AG04450 (cell line): ENCODE measurements at regions of chr9 and their contacts with region 1.

Region 1: DNA sequence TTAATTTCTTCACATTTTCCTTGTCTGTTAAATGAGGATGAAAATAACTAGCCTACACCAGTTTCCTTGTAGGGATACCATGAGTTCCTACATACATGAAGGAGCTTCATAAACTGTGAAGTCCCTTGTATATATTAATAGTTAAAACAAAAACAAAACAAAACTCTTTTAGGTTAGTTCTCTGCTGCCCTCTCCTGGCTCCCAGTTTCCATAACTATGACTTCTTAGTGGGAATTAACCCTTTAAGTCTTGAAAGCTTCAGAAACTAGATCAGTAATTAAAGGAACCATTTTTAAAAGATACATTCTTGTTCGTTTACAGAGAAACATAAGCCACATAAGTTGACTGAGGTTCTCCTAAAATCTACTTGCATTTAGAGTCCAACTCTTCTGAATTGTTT is 500.0 kb upstream of the C9orf72 start:
- DNase-seq: no peak
- H3K4me3 ChIP-seq: no peak overlapping the region
- H3K27ac ChIP-seq: no peak overlapping the region
- H3K27me3 ChIP-seq: no peaks in the 10 kb centered on the region
- CTCF ChIP-seq: peak; percentile 43

Region 2: DNA sequence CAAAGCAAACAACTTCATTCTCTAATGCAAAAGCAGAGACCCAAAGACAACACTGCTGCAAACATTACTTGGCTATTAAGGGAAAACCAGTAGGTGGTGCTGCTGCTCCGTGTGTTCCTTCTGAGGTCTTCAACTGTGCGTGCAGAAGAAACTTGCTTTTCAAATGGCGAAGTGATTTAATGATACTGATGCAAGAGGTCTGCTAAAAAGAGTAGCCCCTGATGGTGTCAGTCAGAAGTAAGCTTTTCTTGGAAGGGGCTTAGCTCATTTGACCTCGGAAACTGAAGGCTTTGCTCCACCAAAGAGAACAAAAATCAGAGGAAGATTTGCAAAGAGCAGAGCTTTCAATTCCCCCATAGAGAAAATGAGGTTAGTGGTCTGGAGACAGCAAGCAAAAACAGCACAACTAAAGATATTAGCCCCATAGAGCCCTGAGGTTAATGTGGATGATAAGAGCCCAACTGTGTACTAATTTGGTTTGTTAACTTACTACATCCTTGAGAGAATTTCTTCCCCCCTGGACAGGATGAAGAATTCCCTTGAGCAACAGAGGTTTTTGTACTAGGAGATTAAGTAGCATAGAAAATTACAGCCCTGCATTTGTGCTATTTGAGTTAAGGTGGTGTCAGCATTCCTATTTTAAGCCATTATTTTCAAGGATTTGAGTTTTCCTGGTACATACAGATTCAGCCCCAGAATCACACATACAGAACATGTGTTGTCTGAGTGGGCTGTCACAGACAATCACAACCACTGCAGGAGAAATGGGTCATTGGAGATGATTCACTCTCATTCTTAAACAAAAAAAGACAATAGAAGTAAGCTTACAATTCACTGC is 346.8 kb before region 1 on chr9:
- CTCF ChIA-PET with region 1: interaction called, 57 read pairs
- POLR2A ChIA-PET with region 1: no interaction called
- DNase-seq: peak; percentile 1
- H3K4me3 ChIP-seq: no peak overlapping the region
- H3K27ac ChIP-seq: no peak overlapping the region
- H3K27me3 ChIP-seq: no peaks in the 10 kb centered on the region
- CTCF ChIP-seq: peak; percentile 74

Region 3: DNA sequence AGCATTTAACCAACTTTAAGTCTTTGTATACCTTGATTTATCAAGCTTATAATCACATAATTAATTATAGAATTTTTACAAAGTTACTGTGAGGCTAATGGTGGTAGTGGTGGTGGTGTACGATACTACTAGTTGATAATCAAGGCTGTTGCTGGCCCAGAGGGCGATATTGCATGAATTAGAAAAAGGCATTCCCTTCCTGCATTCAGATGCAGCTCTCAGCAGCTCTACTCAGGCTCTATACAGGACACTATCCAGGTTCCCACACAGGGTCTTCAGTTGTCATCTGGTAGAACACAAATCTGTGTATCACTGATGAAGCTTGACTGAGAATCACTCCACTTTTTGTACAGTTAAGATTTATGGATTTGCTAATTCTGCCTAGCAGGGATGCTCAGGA is 62.8 kb after region 1 on chr9:
- CTCF ChIA-PET with region 1: no interaction called
- POLR2A ChIA-PET with region 1: no interaction called
- DNase-seq: no peak
- H3K4me3 ChIP-seq: no peak overlapping the region
- H3K27ac ChIP-seq: no peak overlapping the region
- H3K27me3 ChIP-seq: no peaks in the 10 kb centered on the region
- CTCF ChIP-seq: no peak